Activated T-helper 2 cell treated with anti-CD3 and anti-CD28 coated beads, Interferon-gamma antibody, Interleukin-2, Interleukin-4, amounts not matched to agents 10 μg/mL and 5 μg/mL and 100 μg/mL, durations not matched to agents 14 hours and 24 hours and 36 hours (primary cell): ENCODE measurements at regions of chr15 and their contacts with region 1.

Region 1: GRCh38 chr15:91706322-91707032 is 147.0 kb upstream of the SLCO3A1 start:
- DNase-seq: peak; percentile 86
- H3K4me3 Mint-ChIP-seq: no peak overlapping the region
- H3K27ac Mint-ChIP-seq: peak overlapping the region; percentile 50
- H3K4me1 Mint-ChIP-seq: peaks cover 16% of the 10 kb centered on the region
- H3K27me3 Mint-ChIP-seq: peaks cover 22% of the 10 kb centered on the region

Region 2: DNA sequence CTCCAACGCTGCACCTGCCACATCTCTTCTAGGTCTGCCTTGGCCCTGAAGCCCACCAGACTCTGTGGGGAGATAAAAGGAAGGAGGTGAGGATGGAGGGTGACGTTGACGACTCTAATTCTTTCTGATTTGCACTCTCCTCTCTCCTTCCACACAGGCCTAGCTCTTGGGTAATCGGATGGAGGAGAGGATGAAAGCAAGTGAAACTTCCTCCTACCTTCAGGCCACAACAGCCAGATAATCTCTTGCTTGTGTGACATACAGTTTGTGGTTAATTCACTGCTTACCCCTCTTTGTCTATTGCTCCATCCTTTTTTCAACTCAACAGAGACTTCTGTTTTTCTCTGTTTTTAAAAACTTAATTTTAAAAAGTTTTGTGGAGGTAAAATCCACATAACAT is 398.3 kb before region 1 on chr15:
- intact Hi-C with region 1: loop called (anchors 5 kb)
- DNase-seq: no peak
- H3K4me3 Mint-ChIP-seq: no peak overlapping the region
- H3K27ac Mint-ChIP-seq: no peak overlapping the region
- H3K4me1 Mint-ChIP-seq: peaks cover 34% of the 10 kb centered on the region
- H3K27me3 Mint-ChIP-seq: peaks cover 63% of the 10 kb centered on the region

Region 3: DNA sequence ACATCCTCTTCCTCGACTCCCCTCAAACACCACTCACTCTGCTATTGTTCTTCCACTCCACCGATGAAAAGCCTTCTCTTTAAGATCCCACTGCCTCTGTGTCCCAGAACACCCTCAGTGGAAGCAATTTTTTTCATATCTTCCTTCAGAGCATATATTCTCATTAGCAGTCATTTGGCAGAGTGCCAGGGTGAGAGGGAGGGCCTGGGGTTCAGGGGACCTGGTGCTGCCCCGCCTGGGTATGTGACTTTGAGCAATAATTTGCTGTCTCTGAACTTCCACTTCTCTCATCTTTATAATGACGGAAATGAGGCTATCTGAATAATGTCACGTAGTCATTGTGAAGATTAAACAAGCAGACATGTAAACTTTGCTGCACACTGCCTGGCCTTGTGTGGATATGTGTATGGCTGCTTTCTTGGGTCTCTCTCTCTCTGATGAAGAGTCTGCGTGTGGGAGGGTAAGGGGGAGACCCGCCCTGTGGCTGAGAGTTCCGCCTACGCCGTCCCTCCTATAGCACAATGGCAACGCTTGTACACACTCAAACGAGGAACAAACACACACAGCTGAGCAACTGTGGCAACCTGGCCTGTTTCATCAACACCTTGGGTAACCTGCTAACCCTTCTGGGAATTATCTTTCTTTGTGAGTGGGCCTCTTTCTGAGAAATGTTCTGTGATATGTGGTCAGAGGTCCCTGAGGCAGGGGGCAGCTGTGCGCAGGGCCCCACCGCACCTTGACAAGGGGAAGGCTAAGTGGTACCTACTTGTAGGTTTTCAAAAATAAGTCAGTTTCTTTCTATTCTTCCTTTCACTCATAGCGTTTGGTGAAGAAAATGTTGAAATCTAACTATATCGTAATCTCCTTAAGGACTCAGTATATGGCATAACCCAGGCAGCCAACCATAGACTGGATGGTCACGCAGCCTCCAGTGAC is 236.6 kb before region 1 on chr15:
- intact Hi-C with region 1: loop called (anchors 2 kb)
- DNase-seq: peak; percentile 38
- H3K4me3 Mint-ChIP-seq: peak overlapping the region; percentile 30
- H3K27ac Mint-ChIP-seq: peak overlapping the region; percentile 37
- H3K4me1 Mint-ChIP-seq: peaks cover 37% of the 10 kb centered on the region
- H3K27me3 Mint-ChIP-seq: peaks cover 13% of the 10 kb centered on the region

Region 4: GRCh38 chr15:91611561-91612323 is 94.7 kb before region 1 on chr15:
- intact Hi-C with region 1: no loop called
- DNase-seq: no peak
- H3K4me3 Mint-ChIP-seq: no peak overlapping the region
- H3K27ac Mint-ChIP-seq: no peak overlapping the region
- H3K4me1 Mint-ChIP-seq: no peaks in the 10 kb centered on the region
- H3K27me3 Mint-ChIP-seq: no peaks in the 10 kb centered on the region

Region 5: GRCh38 chr15:91801836-91802534 is 95.5 kb after region 1 on chr15:
- intact Hi-C with region 1: loop called (anchors 5 kb)
- DNase-seq: no peak
- H3K4me3 Mint-ChIP-seq: no peak overlapping the region
- H3K27ac Mint-ChIP-seq: peak overlapping the region; percentile 47
- H3K4me1 Mint-ChIP-seq: peaks cover 24% of the 10 kb centered on the region
- H3K27me3 Mint-ChIP-seq: peaks cover 3% of the 10 kb centered on the region

Region 6: DNA sequence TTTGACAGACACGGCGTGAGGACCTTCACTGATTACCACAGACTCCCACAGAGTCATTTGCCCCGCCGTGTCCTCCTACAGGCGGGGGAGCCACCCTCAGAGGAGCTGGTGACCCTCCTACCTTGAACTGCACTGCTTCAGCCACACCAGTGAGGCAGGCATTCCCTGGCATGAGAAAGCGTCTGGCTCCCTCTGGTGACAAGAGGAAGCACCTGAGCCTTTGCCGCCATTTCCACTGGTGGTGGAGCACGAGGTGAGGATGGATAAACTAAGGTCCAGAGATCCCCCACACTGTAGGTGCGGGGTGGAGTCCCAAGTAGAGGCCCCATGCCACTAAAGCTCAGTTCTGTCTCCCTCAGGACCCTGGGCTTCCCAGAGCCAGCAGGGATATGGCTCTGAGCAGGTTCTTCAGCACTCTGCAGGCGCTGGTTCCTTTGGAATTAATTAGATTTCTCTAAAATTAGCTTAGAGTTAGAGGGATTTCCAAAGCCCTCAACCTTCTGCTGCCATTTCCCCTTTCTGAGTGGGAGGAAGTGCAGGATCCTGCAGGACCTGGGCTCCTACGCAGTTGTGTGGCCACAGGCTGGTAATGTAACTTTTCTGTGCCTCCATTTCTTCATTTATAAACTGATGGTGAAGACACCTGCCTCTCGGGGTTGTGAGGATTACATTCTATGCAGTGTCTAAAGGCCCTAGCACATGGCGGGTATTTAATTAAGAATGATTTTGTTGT is 371.0 kb after region 1 on chr15:
- intact Hi-C with region 1: loop called (anchors 2 kb)
- DNase-seq: peak; percentile 37
- H3K4me3 Mint-ChIP-seq: no peak overlapping the region
- H3K27ac Mint-ChIP-seq: no peak overlapping the region
- H3K4me1 Mint-ChIP-seq: peaks cover 32% of the 10 kb centered on the region
- H3K27me3 Mint-ChIP-seq: no peaks in the 10 kb centered on the region